ENCODE measurements at regions of chr2 and their contacts with region 1.

Region 1: GRCh38 chr2:10911261-10912075 is at the start of gene KCNF1:
- DNase-seq: no peak
- H3K4me3 ChIP-seq: peak within 1 kb of the TSS; percentile 32 to 64 (median 46)
- H3K27ac ChIP-seq: no peak within 1 kb of the TSS
- H3K4me1 ChIP-seq: peaks cover 3 to 28% (median 10%) of the 10 kb centered on the region in 4 experiments
- H3K27me3 ChIP-seq: peaks cover 13 to 40% (median 29%) of the 10 kb centered on the region in 4 experiments; a peak in 6 of 7 replicates
- CTCF ChIP-seq: peak in 2 of 3 experiments; percentile 19 to 34; a peak in 2 of 4 replicates
- EP300 ChIP-seq: no peak
- POLR2A ChIP-seq: no peak
- RAD21 ChIP-seq: peak; percentile 36 to 39
- total RNA-seq, gene KCNF1: 0.48 and 0.90 TPM in 2 replicates

Region 2: DNA sequence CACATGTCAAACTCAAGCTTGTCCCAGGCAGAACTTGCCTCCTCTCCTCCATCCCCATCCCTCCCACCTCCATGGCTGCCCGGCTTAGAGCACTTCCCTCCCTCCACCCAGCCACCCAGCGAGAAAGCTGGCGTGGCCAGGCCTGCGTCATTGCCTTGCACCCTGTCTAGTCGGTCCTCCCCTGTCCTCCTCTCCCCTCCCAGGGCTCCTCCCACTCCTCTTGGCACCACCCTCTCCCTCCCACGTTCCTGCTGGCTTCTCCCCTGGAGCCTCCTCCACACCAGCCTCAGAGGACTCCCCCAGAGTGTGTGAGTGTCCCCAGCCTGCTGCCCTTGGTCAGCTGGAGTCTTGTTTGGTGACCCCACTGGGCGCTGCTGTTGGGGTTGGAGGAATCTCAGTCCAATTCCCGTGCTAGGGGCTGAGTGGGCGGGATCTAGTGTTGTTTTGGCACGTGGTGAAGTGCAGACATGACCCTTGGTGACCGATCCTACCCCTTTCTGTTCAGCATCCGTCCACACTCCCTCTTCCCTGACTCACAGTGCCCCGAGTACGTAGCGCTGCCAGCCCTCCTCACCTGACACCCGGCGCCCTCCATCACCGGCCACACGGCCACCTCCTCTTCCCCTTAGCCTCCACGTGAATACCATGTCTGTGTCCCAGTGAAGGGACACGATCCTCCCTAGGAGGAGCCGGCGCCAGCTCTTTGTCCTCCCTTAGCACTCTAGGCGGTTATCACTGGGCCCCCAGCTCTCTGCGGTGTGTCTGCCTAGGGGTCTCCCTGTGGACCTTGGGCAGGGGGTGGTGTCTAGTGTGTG is 148.6 kb before region 1 on chr2:
- CTCF ChIA-PET with region 1: no interaction called
- POLR2A ChIA-PET with region 1: no interaction called
- DNase-seq: no peak
- H3K4me3 ChIP-seq: no peak overlapping the region
- H3K27ac ChIP-seq: no peak overlapping the region
- H3K4me1 ChIP-seq: peaks cover 0 to 5% (median 0%) of the 10 kb centered on the region in 4 experiments; a peak in 1 of 7 replicates
- H3K27me3 ChIP-seq: no peaks in the 10 kb centered on the region
- CTCF ChIP-seq: no peak
- EP300 ChIP-seq: no peak
- POLR2A ChIP-seq: no peak
- RAD21 ChIP-seq: no peak

Region 3: DNA sequence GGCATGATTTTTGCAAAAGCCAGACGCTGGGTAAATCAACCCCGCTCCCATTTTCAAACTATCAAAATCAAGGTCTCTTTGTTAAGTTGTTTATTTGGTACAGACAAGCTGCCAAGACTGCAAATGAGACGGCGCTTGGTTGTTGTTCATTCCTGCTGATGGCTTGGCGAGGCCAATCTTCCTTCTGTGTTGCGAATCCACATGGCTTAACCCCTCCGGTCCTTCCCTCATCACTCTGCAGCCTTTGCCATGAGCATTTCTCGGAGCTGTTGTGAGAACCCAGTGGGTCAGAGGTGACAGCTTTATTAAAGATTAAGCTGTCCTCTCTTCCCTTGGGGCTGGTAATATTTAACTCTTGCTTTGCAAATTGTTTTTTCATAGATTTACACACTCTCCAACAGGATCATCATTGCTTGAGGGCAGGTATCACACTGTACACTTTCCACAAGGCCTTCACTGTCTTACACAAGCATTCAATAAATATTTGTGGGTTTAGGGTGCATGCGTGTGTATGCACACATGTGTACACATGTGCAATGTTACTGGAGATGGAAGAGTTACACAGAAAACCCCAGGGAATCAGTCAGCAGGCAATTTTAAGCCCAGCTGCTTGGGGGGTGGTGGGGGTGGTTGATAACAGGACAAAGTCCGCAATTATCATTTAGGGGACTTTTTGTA is 27.5 kb before region 1 on chr2:
- CTCF ChIA-PET with region 1: interaction called, 38 read pairs
- POLR2A ChIA-PET with region 1: no interaction called
- DNase-seq: no peak
- H3K4me3 ChIP-seq: no peak overlapping the region
- H3K27ac ChIP-seq: no peak overlapping the region
- H3K4me1 ChIP-seq: peaks cover 2 to 23% (median 11%) of the 10 kb centered on the region in 4 experiments; a peak in 5 of 7 replicates
- H3K27me3 ChIP-seq: no peaks in the 10 kb centered on the region
- CTCF ChIP-seq: no peak
- EP300 ChIP-seq: no peak
- POLR2A ChIP-seq: no peak
- RAD21 ChIP-seq: no peak

Region 4: DNA sequence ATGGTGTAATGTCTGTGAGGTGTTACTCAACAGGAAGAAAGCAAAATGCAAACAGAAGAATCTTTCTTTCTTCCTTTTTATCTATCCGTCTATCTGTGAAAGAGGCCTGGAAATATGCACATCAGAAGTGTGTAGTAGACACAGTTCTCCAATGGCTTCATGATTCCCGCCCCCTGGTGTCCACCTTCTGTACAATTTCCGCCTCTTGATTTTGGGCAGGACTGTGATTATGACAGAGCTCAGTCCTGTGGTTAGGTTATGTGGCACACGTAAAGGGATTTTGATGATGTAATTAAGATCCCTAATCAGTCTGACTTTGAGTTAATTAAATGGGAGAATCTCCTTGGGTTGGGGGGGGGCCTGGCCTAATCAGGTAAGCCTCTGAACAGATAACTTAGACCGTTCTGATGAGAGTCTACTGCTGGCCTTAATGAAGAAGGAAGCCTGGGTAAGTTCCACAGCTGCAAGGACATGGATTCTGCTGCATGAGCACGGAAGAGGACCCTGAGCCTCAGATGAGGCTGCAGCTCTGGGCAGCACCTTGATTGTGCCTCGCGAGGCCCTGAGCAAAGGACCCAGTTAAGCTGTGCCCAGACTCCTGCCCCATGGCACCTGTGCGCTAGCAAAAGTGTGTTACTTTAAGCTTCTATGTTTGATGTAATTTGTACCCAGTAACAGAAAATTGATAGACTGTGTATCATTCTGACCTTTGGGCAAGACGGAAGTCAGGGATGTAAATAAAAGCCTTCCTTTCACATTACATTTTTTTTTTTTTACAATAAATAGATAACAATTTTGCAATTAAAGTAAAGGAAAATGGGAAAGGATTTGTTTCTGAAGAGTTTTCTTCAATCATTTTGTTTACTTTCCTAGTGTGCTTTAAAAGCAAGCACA is 11.0 kb before region 1 on chr2:
- CTCF ChIA-PET with region 1: interaction called, 85 read pairs
- POLR2A ChIA-PET with region 1: no interaction called
- DNase-seq: no peak
- H3K4me3 ChIP-seq: no peak overlapping the region
- H3K27ac ChIP-seq: no peak overlapping the region
- H3K4me1 ChIP-seq: no peaks in the 10 kb centered on the region
- H3K27me3 ChIP-seq: no peaks in the 10 kb centered on the region
- CTCF ChIP-seq: peak in 2 of 3 experiments; percentile 7 to 17; a peak in 1 of 4 replicates
- EP300 ChIP-seq: no peak
- POLR2A ChIP-seq: no peak
- RAD21 ChIP-seq: peak in 1 of 2 experiments; percentile 22; a peak in 1 of 4 replicates

Region 5: GRCh38 chr2:10944799-10945198 is 33.3 kb after region 1 on chr2:
- CTCF ChIA-PET with region 1: interaction called, 15 read pairs
- POLR2A ChIA-PET with region 1: no interaction called
- DNase-seq: no peak
- H3K4me3 ChIP-seq: no peak overlapping the region
- H3K27ac ChIP-seq: no peak overlapping the region
- H3K4me1 ChIP-seq: no peaks in the 10 kb centered on the region
- H3K27me3 ChIP-seq: no peaks in the 10 kb centered on the region
- CTCF ChIP-seq: no peak
- EP300 ChIP-seq: no peak
- POLR2A ChIP-seq: no peak
- RAD21 ChIP-seq: no peak

Region 6: GRCh38 chr2:10989151-10989550 is 77.7 kb after region 1 on chr2:
- CTCF ChIA-PET with region 1: no interaction called
- POLR2A ChIA-PET with region 1: no interaction called
- DNase-seq: no peak
- H3K4me3 ChIP-seq: no peak overlapping the region
- H3K27ac ChIP-seq: no peak overlapping the region
- H3K4me1 ChIP-seq: no peaks in the 10 kb centered on the region
- H3K27me3 ChIP-seq: no peaks in the 10 kb centered on the region
- CTCF ChIP-seq: no peak
- EP300 ChIP-seq: no peak
- POLR2A ChIP-seq: no peak
- RAD21 ChIP-seq: no peak

Measured in H1 (cell line).